ENCODE measurements at regions of chr2 and their contacts with region 1.

Region 1: GRCh38 chr2:96760036-96760985 is at the start of gene CNNM4:
- DNase-seq: peak; percentile 94
- ATAC-seq: peak; percentile 95
- H3K4me3 Mint-ChIP-seq: peak within 1 kb of the TSS; percentile 79
- H3K27ac Mint-ChIP-seq: peak within 1 kb of the TSS; percentile 83
- H3K4me1 Mint-ChIP-seq: peaks cover 44% of the 10 kb centered on the region
- H3K27me3 Mint-ChIP-seq: no peaks in the 10 kb centered on the region
- CTCF ChIP-seq: no peak
- total RNA-seq, gene CNNM4: 5.1 to 5.8 TPM

Region 2: DNA sequence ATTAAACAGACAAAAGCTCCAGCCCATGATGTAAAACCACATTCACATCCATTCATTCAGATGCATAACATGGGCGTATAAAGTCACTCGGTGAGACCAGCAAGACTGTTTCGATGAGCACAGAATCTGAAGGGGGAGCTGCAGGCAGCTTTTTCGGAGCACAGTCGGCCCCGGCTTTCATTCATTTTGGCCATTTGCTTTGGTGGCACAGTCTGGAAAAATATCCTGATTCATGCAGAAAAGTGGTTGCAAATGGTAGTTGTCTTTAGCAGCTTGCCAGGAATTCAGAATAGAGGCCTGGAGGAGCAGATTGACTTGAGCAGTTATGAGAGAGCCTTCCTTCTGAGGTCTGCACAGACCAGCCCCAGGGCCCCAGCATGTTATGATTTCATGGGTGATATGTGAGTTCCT is 212.6 kb before region 1 on chr2:
- CTCF ChIA-PET with region 1: no interaction called
- POLR2A ChIA-PET with region 1: no interaction called
- intact Hi-C with region 1: no loop called
- DNase-seq: no peak
- ATAC-seq: no peak
- H3K4me3 Mint-ChIP-seq: no peak overlapping the region
- H3K27ac Mint-ChIP-seq: no peak overlapping the region
- H3K4me1 Mint-ChIP-seq: peaks cover 48% of the 10 kb centered on the region
- H3K27me3 Mint-ChIP-seq: no peaks in the 10 kb centered on the region
- CTCF ChIP-seq: no peak

Region 3: DNA sequence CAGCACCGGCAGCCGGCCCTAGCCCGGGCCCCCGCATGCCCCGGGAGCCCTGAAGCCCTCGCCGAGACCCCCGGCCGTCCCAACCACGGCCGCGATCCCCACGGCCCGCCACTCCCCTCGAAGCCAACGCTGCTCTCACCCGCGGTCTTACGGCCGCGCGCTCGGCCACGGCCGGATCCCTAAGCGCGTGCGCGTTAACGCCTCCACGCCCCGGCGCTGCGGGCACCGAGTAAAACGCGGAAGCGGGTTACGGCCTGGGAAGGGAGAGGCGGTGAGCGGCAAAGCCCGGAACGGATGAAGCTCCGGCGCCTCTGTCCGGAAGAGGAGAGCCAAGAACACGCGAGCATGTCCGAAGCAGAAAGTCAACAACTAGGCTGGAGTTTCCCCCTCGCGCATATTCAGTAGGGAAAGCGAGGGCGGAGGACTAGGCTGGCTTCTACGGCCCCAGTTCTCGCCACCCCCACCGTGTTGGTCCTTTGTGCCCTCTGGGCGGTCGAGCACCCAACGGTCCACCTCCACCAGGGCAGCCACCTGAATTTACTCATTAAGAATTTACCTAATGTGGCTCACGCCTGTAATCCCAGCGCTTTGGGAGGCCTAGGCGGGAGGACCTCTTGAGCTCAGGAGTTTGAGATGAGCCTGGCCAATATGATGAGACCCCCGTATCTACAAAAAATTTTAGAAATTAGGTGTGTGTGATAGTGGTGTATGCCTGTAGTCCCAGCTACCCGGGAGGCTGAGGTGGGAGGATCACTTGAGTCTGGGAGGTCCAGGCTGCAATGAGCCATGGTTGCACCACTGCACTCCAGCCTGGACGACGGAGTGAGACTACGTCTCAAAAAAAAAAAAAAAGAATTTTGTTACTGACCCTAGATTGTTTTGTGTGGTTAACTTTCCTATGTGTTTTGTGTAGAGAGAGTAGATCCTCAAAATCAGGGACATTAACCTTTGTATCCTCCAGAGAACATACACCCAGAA is 121.9 kb before region 1 on chr2 and contains the start of gene KANSL3:
- CTCF ChIA-PET with region 1: interaction called, 6 read pairs
- POLR2A ChIA-PET with region 1: interaction called, 11 read pairs
- intact Hi-C with region 1: loop called (anchors 10 kb)
- DNase-seq: peak; percentile 89
- ATAC-seq: peak; percentile 95
- H3K4me3 Mint-ChIP-seq: peak within 1 kb of the TSS; percentile 92
- H3K27ac Mint-ChIP-seq: peak within 1 kb of the TSS; percentile 95
- H3K4me1 Mint-ChIP-seq: peaks cover 34% of the 10 kb centered on the region
- H3K27me3 Mint-ChIP-seq: peaks cover 3% of the 10 kb centered on the region
- CTCF ChIP-seq: no peak
- total RNA-seq, gene KANSL3: 37.8 to 39.8 TPM

Region 4: DNA sequence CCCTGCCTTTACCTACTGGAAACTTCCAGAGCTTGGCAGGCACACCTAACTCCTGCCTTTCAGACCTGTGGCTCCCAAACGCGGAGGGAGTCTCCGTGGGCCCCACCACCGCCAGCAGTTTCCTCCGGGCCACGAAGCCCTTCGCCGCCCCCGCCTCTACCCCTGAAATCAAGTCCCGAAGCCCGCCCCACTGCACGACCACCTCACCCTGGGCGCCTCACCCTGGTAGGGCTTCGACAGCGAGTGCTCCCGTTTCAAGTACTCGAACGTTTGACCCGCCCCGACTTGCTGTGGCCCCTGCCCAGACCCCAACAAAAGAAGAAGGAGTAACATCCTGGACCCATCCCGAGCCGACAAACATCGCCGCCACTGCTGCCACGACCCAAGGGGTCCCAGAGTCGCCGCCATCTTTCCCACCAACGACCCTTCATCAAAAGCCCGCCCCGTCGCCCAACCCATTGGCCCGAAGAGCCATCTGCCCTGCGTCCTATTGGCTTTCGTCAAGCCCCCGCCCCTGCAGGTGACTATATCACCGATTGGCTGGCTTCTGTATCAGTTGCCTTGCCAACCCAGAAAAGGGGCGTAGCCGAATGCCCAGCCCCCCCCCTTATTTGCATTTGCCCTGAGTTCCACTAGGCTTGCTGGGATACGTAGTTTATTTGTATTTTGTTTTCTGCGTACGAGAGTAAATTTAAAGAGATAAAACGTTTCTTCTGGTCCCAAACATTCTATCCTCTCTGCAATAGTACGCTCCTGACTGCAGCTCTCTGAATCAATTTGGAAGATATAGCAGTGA is 20.5 kb before region 1 on chr2 and contains the start of gene LMAN2L:
- CTCF ChIA-PET with region 1: interaction called, 33 read pairs
- POLR2A ChIA-PET with region 1: interaction called, 7 read pairs
- intact Hi-C with region 1: no loop called
- DNase-seq: peak; percentile 100
- ATAC-seq: peak; percentile 100
- H3K4me3 Mint-ChIP-seq: peak within 1 kb of the TSS; percentile 99
- H3K27ac Mint-ChIP-seq: peak within 1 kb of the TSS; percentile 87
- H3K4me1 Mint-ChIP-seq: peaks cover 30% of the 10 kb centered on the region
- H3K27me3 Mint-ChIP-seq: no peaks in the 10 kb centered on the region
- CTCF ChIP-seq: no peak
- total RNA-seq, gene LMAN2L: 4.4 to 6.1 TPM

Region 5: GRCh38 chr2:96773922-96774321 is 13.6 kb after region 1 on chr2:
- CTCF ChIA-PET with region 1: interaction called, 62 read pairs
- POLR2A ChIA-PET with region 1: interaction called, 13 read pairs
- intact Hi-C with region 1: no loop called
- DNase-seq: peak; percentile 55
- ATAC-seq: peak; percentile 76
- H3K4me3 Mint-ChIP-seq: peak overlapping the region; percentile 69
- H3K27ac Mint-ChIP-seq: peak overlapping the region; percentile 85
- H3K4me1 Mint-ChIP-seq: peaks cover 23% of the 10 kb centered on the region
- H3K27me3 Mint-ChIP-seq: no peaks in the 10 kb centered on the region
- CTCF ChIP-seq: no peak

Region 6: GRCh38 chr2:96783388-96783787 is 23.1 kb after region 1 on chr2:
- CTCF ChIA-PET with region 1: interaction called, 22 read pairs
- POLR2A ChIA-PET with region 1: no interaction called
- intact Hi-C with region 1: no loop called
- DNase-seq: no peak
- ATAC-seq: no peak
- H3K4me3 Mint-ChIP-seq: no peak overlapping the region
- H3K27ac Mint-ChIP-seq: no peak overlapping the region
- H3K4me1 Mint-ChIP-seq: peaks cover 4% of the 10 kb centered on the region
- H3K27me3 Mint-ChIP-seq: no peaks in the 10 kb centered on the region
- CTCF ChIP-seq: no peak

Region 7: DNA sequence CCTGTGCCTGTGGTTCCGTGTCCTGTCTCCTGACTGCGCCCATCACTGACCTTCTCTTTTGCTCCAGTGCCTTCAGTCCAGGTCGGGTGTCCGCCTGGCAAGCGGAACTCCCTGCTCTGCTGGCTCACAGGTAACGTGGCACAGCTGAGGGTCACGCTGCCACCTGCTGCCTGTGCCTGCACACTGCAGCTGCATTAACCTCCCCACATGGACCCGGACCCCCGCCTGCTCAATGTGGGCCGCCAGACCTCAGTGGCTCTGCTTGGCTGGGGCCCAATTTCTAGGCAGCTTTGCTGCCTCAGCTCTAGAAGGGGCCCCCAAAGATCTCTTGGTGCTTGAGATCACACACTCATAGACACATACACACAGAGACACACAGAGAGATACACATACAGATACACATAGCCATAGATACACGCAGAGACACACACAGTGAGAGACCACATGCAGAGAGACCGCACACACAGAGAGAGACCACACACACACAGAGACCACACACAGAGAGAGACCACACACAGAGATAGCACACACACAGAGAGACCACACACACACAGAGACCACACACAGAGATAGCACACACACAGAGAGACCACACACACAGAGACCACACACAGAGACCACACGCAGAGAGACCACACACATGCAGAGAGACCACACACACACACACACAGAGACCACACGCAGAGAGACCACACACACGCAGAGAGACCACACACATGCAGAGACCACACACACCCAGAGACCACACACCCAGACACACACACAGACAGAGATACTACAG is 40.9 kb after region 1 on chr2:
- CTCF ChIA-PET with region 1: interaction called, 14 read pairs
- POLR2A ChIA-PET with region 1: interaction called, 3 read pairs
- intact Hi-C with region 1: no loop called
- DNase-seq: peak; percentile 84
- ATAC-seq: peak; percentile 98
- H3K4me3 Mint-ChIP-seq: no peak overlapping the region
- H3K27ac Mint-ChIP-seq: no peak overlapping the region
- H3K4me1 Mint-ChIP-seq: peaks cover 3% of the 10 kb centered on the region
- H3K27me3 Mint-ChIP-seq: no peaks in the 10 kb centered on the region
- CTCF ChIP-seq: peak; percentile 90

Region 8: GRCh38 chr2:96816128-96816835 is 56.0 kb after region 1 on chr2 and contains the start of gene CNNM3:
- CTCF ChIA-PET with region 1: interaction called, 18 read pairs
- POLR2A ChIA-PET with region 1: interaction called, 3 read pairs
- intact Hi-C with region 1: no loop called
- DNase-seq: peak; percentile 96
- ATAC-seq: peak; percentile 95
- H3K4me3 Mint-ChIP-seq: peak within 1 kb of the TSS; percentile 80
- H3K27ac Mint-ChIP-seq: peak within 1 kb of the TSS; percentile 69
- H3K4me1 Mint-ChIP-seq: peaks cover 47% of the 10 kb centered on the region
- H3K27me3 Mint-ChIP-seq: no peaks in the 10 kb centered on the region
- CTCF ChIP-seq: peak; percentile 61
- total RNA-seq, gene CNNM3: 15.8 to 19.3 TPM

Region 9: GRCh38 chr2:96907115-96908041 is 147.1 kb after region 1 on chr2:
- CTCF ChIA-PET with region 1: no interaction called
- POLR2A ChIA-PET with region 1: no interaction called
- intact Hi-C with region 1: no loop called
- DNase-seq: no peak
- ATAC-seq: no peak
- H3K4me3 Mint-ChIP-seq: no peak overlapping the region
- H3K27ac Mint-ChIP-seq: no peak overlapping the region
- H3K4me1 Mint-ChIP-seq: peaks cover 10% of the 10 kb centered on the region
- H3K27me3 Mint-ChIP-seq: no peaks in the 10 kb centered on the region
- CTCF ChIP-seq: no peak

Measured in activated CD8-positive, alpha-beta T cell treated with anti-CD3 and anti-CD28 coated beads for 36 hours (primary cell).